Sigmoid colon (tissue), 7 donors: ENCODE measurements at regions of chrX and their contacts with region 1.

Region 1: GRCh38 chrX:119118780-119119395 is 8.7 kb downstream of the KIAA1210 start:
- DNase-seq: no peak
- H3K4me3 ChIP-seq: no peak overlapping the region
- H3K27ac ChIP-seq: no peak overlapping the region
- H3K4me1 ChIP-seq: no peaks in the 10 kb centered on the region
- H3K27me3 ChIP-seq: no peaks in the 10 kb centered on the region
- CTCF ChIP-seq: peak; percentile 23 to 63 (median 46)
- EP300 ChIP-seq: no peak
- POLR2A ChIP-seq: no peak

Region 2: GRCh38 chrX:119093991-119094737 is 24.7 kb before region 1 on chrX:
- intact Hi-C with region 1: no loop called
- DNase-seq: no peak
- H3K4me3 ChIP-seq: no peak overlapping the region
- H3K27ac ChIP-seq: no peak overlapping the region
- H3K4me1 ChIP-seq: no peaks in the 10 kb centered on the region
- H3K27me3 ChIP-seq: no peaks in the 10 kb centered on the region
- CTCF ChIP-seq: no peak
- EP300 ChIP-seq: no peak
- POLR2A ChIP-seq: no peak

Region 3: GRCh38 chrX:119211649-119212014 is 92.7 kb after region 1 on chrX:
- intact Hi-C with region 1: loop called (anchors 5 kb)
- DNase-seq: no peak
- H3K4me3 ChIP-seq: no peak overlapping the region
- H3K27ac ChIP-seq: no peak overlapping the region
- H3K4me1 ChIP-seq: no peaks in the 10 kb centered on the region
- H3K27me3 ChIP-seq: no peaks in the 10 kb centered on the region
- CTCF ChIP-seq: no peak
- EP300 ChIP-seq: no peak
- POLR2A ChIP-seq: no peak

Region 4: DNA sequence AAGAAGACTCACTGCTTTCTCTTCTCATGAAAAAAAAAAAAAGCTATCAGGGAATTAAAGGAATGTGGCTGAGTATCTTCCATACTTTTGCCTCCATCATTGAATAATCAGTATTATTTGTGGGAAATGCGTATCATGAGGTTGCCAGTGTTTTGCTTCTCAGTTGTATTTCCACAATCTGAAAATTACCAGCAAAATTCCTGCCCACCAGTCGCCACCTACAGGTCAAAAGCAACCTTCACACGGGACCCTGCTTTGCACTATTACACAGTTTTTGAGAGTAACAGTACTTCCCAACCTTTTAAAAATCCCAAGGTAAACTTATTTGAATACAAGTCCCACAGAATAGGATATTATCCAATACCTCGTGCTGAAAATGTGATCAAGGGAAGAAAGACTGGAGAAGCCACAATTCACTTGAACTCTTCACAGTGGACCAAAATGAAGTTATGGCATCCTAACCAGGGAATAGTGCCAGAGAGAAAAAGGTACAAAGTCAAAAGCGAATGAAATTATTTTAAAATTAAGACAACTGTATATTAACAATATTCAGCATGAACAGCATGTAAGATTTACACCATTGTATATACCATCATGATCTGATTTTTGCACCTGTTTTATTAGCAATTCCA is 147.6 kb after region 1 on chrX:
- intact Hi-C with region 1: loop called (anchors 2 kb)
- DNase-seq: no peak
- H3K4me3 ChIP-seq: no peak overlapping the region
- H3K27ac ChIP-seq: no peak overlapping the region
- H3K4me1 ChIP-seq: no peaks in the 10 kb centered on the region
- H3K27me3 ChIP-seq: no peaks in the 10 kb centered on the region
- CTCF ChIP-seq: peak in 3 of 4 experiments; percentile 20 to 58 (median 26)
- EP300 ChIP-seq: no peak
- POLR2A ChIP-seq: no peak